ENCODE measurements at regions of chr1 and their contacts with region 1.

Region 1: DNA sequence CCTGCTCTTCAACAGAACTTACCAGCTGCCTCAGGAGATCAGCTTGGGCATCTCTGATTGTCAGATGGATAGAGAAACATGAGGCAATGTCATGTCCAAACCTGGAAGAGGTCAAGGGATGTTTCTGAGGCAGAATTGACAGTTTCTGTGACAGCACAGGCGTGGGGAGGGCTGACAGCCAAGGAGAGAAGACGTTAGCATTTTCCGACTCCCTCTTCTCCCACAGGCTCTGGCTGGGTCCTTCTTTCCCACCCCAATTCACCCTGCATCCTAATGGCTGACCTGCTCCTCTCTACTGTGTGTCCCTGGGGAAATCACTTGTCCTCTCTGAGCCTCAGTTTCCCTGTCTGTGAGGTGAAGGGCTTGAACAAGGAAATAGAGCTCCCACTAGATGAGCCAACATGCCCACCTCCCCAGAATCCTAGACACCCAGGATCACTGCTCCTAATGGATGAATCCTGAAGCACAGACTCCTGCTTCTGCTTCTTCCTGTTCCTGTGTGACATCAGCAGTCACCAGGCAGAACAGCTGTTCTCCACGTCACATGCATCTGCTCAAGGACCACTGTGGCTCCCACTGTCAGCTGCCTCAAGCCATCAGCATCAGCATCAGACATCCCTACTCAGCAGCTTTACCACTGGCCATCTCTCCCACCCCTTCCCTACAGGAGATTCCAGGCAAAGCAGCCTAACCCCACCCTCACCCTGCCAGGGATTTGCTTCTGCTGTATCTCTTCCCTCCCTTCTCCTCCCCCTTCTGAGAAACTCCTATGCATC is 408.0 kb downstream of the MATN1 start:
- DNase-seq: no peak
- H3K4me3 ChIP-seq: no peak overlapping the region
- CTCF ChIP-seq: no peak

Region 2: GRCh38 chr1:30232288-30232899 is 83.0 kb before region 1 on chr1:
- in situ Hi-C with region 1: no loop called
- DNase-seq: no peak
- H3K4me3 ChIP-seq: no peak overlapping the region
- CTCF ChIP-seq: peak; percentile 44

Region 3: DNA sequence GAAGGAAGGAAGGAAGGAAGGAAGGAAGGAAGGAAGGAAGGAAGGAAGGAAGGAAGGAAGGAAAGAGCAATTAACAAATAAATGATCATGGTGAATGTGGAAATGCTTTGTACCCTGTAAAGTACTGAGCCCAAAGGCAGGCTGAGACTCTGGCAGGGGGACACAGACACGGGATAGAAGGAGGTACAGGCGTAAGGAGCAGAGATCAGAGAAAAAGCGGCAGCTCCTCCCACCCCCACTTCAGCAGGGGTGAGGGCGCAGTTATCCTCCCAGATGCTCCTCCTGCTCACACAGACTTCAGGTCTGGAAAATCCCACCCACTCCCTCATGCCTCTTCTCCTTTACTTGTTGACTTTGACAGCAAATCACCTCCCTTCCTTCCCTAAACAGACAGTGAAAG is 56.5 kb before region 1 on chr1:
- in situ Hi-C with region 1: loop called (anchors 5 kb)
- DNase-seq: no peak
- H3K4me3 ChIP-seq: no peak overlapping the region
- CTCF ChIP-seq: no peak

Measured in astrocyte of the cerebellum (primary cell).